HCT116 (cell line): ENCODE measurements at regions of chr1 and their contacts with region 1.

Region 1: GRCh38 chr1:7961216-7962015 is at the start of gene PARK7:
- DNase-seq: peak; percentile 97
- ATAC-seq: peak; percentile 97
- H3K4me3 ChIP-seq: peak within 1 kb of the TSS; percentile 69 to 79
- H3K27ac ChIP-seq: peak within 1 kb of the TSS; percentile 87
- H3K4me1 ChIP-seq: peaks cover 2 to 16% of the 10 kb centered on the region in 2 experiments; a peak in 3 of 4 replicates
- H3K27me3 ChIP-seq: no peaks in the 10 kb centered on the region
- CTCF ChIP-seq: peak; percentile 9 to 57 (median 36); a peak in 3 of 6 replicates
- POLR2A ChIP-seq: peak; percentile 97
- RAD21 ChIP-seq: peak; percentile 51
- total RNA-seq, gene PARK7: 370 TPM

Region 2: GRCh38 chr1:7783826-7784491 is 177.5 kb before region 1 on chr1 and contains the start of gene PER3:
- CTCF ChIA-PET with region 1: no interaction called
- POLR2A ChIA-PET with region 1: no interaction called
- RAD21 ChIA-PET with region 1: no interaction called
- intact Hi-C with region 1: loop called (anchors 5 kb)
- DNase-seq: peak; percentile 81
- ATAC-seq: peak; percentile 98
- H3K4me3 ChIP-seq: peak within 1 kb of the TSS; percentile 38 to 46
- H3K27ac ChIP-seq: peak within 1 kb of the TSS; percentile 64
- H3K4me1 ChIP-seq: peaks cover 0 to 13% of the 10 kb centered on the region in 2 experiments; a peak in 3 of 4 replicates
- H3K27me3 ChIP-seq: no peaks in the 10 kb centered on the region
- CTCF ChIP-seq: no peak
- POLR2A ChIP-seq: no peak
- RAD21 ChIP-seq: no peak
- total RNA-seq, gene PER3: 5.8 TPM

Region 3: GRCh38 chr1:7869136-7869905 is 92.1 kb before region 1 on chr1:
- CTCF ChIA-PET with region 1: no interaction called
- POLR2A ChIA-PET with region 1: no interaction called
- RAD21 ChIA-PET with region 1: no interaction called
- intact Hi-C with region 1: no loop called
- DNase-seq: no peak
- ATAC-seq: no peak
- H3K4me3 ChIP-seq: no peak overlapping the region
- H3K27ac ChIP-seq: no peak overlapping the region
- H3K4me1 ChIP-seq: no peaks in the 10 kb centered on the region
- H3K27me3 ChIP-seq: no peaks in the 10 kb centered on the region
- CTCF ChIP-seq: no peak
- POLR2A ChIP-seq: no peak
- RAD21 ChIP-seq: no peak